Activated CD8-positive, alpha-beta T cell treated with anti-CD3 and anti-CD28 coated beads for 36 hours (primary cell): ENCODE measurements at regions of chr3 and their contacts with region 1.

Region 1: GRCh38 chr3:169581633-169582032 is 81.9 kb downstream of the MECOM start:
- DNase-seq: no peak
- ATAC-seq: no peak
- H3K4me3 Mint-ChIP-seq: no peak overlapping the region
- H3K27ac Mint-ChIP-seq: no peak overlapping the region
- H3K4me1 Mint-ChIP-seq: no peaks in the 10 kb centered on the region
- H3K27me3 Mint-ChIP-seq: peaks cover 7% of the 10 kb centered on the region
- CTCF ChIP-seq: no peak

Region 2: GRCh38 chr3:169554660-169555059 is 27.0 kb before region 1 on chr3:
- CTCF ChIA-PET with region 1: no interaction called
- POLR2A ChIA-PET with region 1: no interaction called
- intact Hi-C with region 1: loop called (anchors 2 kb)
- DNase-seq: no peak
- ATAC-seq: no peak
- H3K4me3 Mint-ChIP-seq: no peak overlapping the region
- H3K27ac Mint-ChIP-seq: no peak overlapping the region
- H3K4me1 Mint-ChIP-seq: no peaks in the 10 kb centered on the region
- H3K27me3 Mint-ChIP-seq: no peaks in the 10 kb centered on the region
- CTCF ChIP-seq: no peak

Region 3: GRCh38 chr3:169619793-169620192 is 38.2 kb after region 1 on chr3:
- CTCF ChIA-PET with region 1: no interaction called
- POLR2A ChIA-PET with region 1: no interaction called
- intact Hi-C with region 1: no loop called
- DNase-seq: no peak
- ATAC-seq: no peak
- H3K4me3 Mint-ChIP-seq: no peak overlapping the region
- H3K27ac Mint-ChIP-seq: no peak overlapping the region
- H3K4me1 Mint-ChIP-seq: no peaks in the 10 kb centered on the region
- H3K27me3 Mint-ChIP-seq: no peaks in the 10 kb centered on the region
- CTCF ChIP-seq: no peak